Breast epithelium (tissue), 4 donors: ENCODE measurements at regions of chr6 and their contacts with region 1.

Region 1: GRCh38 chr6:163702736-163703135 is 288.2 kb downstream of the QKI start:
- DNase-seq: no peak
- H3K4me3 ChIP-seq: no peak overlapping the region
- H3K27ac ChIP-seq: no peak overlapping the region
- H3K4me1 ChIP-seq: no peaks in the 10 kb centered on the region
- H3K27me3 ChIP-seq: no peaks in the 10 kb centered on the region
- CTCF ChIP-seq: no peak
- POLR2A ChIP-seq: no peak

Region 2: DNA sequence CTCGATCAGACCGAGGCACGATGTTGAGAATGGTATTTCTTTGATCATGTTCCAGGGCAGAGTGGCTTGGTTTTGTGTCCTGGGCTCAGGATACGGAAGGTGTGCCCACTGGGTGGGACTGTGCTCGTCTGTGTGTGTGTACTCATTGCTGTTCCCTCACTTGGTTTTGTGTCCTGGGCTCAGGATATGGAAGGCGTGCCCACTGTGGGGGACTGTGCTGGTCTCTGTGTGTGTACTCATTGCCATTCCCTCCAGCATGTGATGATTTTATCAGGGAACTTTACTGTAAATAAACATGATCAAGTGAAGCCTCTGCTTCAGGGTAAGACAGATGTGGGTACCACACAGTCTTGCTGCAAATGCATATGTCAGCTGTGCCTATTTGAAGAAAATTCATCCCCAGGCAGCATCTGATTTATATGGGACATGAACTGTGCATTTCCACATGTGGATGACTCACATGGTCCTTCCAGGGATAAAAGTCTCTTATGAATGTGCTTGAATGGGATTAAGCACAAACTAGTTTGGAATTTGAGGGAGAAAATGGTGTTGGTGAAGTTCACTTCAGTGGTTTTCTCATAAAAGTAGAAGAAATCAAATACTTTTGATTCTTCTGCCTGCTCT is 13.9 kb before region 1 on chr6:
- intact Hi-C with region 1: no loop called
- DNase-seq: no peak
- H3K4me3 ChIP-seq: no peak overlapping the region
- H3K27ac ChIP-seq: no peak overlapping the region
- H3K4me1 ChIP-seq: no peaks in the 10 kb centered on the region
- H3K27me3 ChIP-seq: no peaks in the 10 kb centered on the region
- CTCF ChIP-seq: no peak
- POLR2A ChIP-seq: no peak

Region 3: GRCh38 chr6:163712981-163713380 is 10.2 kb after region 1 on chr6:
- intact Hi-C with region 1: loop called (anchors 1 kb)
- DNase-seq: no peak
- H3K4me3 ChIP-seq: no peak overlapping the region
- H3K27ac ChIP-seq: peak overlapping the region in 1 of 2 donors; percentile 89
- H3K4me1 ChIP-seq: no peaks in the 10 kb centered on the region
- H3K27me3 ChIP-seq: no peaks in the 10 kb centered on the region
- CTCF ChIP-seq: no peak
- POLR2A ChIP-seq: no peak